ENCODE measurements at regions of chr17 and their contacts with region 1.

Region 1: GRCh38 chr17:65137021-65137991 is at the start of gene RGS9:
- H3K4me3 ChIP-seq: peak within 1 kb of the TSS; percentile 32
- H3K27ac ChIP-seq: no peak within 1 kb of the TSS
- H3K4me1 ChIP-seq: no peaks in the 10 kb centered on the region
- CTCF ChIP-seq: peak; percentile 95

Region 2: GRCh38 chr17:64920419-64921172 is 216.7 kb before region 1 on chr17:
- CTCF ChIA-PET with region 1: no interaction called
- POLR2A ChIA-PET with region 1: no interaction called
- H3K4me3 ChIP-seq: no peak overlapping the region
- H3K27ac ChIP-seq: no peak overlapping the region
- H3K4me1 ChIP-seq: no peaks in the 10 kb centered on the region
- CTCF ChIP-seq: no peak

Region 3: GRCh38 chr17:65020313-65020712 is 117.0 kb before region 1 on chr17:
- CTCF ChIA-PET with region 1: interaction called, 12 read pairs
- POLR2A ChIA-PET with region 1: no interaction called
- H3K4me3 ChIP-seq: no peak overlapping the region
- H3K27ac ChIP-seq: no peak overlapping the region
- H3K4me1 ChIP-seq: peaks cover 44% of the 10 kb centered on the region
- CTCF ChIP-seq: no peak

Region 4: GRCh38 chr17:65122836-65123756 is 14.2 kb before region 1 on chr17:
- CTCF ChIA-PET with region 1: interaction called, 17 read pairs
- POLR2A ChIA-PET with region 1: no interaction called
- H3K4me3 ChIP-seq: peak overlapping the region; percentile 61
- H3K27ac ChIP-seq: peak overlapping the region; percentile 4; the same call in 1 of the 2 replicates
- H3K4me1 ChIP-seq: no peaks in the 10 kb centered on the region
- CTCF ChIP-seq: no peak

Region 5: GRCh38 chr17:65154770-65155621 is 17.7 kb after region 1 on chr17:
- CTCF ChIA-PET with region 1: interaction called, 17 read pairs
- POLR2A ChIA-PET with region 1: no interaction called
- H3K4me3 ChIP-seq: no peak overlapping the region
- H3K27ac ChIP-seq: no peak overlapping the region
- H3K4me1 ChIP-seq: 0 out of 2 replicates have a peak, but pooled peaks cover 2% of the 10 kb centered on the region
- CTCF ChIP-seq: no peak

Region 6: GRCh38 chr17:65163990-65164495 is 26.7 kb after region 1 on chr17:
- CTCF ChIA-PET with region 1: interaction called, 13 read pairs
- POLR2A ChIA-PET with region 1: no interaction called
- H3K4me3 ChIP-seq: no peak overlapping the region
- H3K27ac ChIP-seq: no peak overlapping the region
- H3K4me1 ChIP-seq: no peaks in the 10 kb centered on the region
- CTCF ChIP-seq: no peak

Region 7: GRCh38 chr17:65198653-65199382 is 61.5 kb after region 1 on chr17:
- CTCF ChIA-PET with region 1: interaction called, 11 read pairs
- POLR2A ChIA-PET with region 1: no interaction called
- H3K4me3 ChIP-seq: no peak overlapping the region
- H3K27ac ChIP-seq: no peak overlapping the region
- H3K4me1 ChIP-seq: no peaks in the 10 kb centered on the region
- CTCF ChIP-seq: peak; percentile 36; the same call in 1 of the 2 replicates

Region 8: DNA sequence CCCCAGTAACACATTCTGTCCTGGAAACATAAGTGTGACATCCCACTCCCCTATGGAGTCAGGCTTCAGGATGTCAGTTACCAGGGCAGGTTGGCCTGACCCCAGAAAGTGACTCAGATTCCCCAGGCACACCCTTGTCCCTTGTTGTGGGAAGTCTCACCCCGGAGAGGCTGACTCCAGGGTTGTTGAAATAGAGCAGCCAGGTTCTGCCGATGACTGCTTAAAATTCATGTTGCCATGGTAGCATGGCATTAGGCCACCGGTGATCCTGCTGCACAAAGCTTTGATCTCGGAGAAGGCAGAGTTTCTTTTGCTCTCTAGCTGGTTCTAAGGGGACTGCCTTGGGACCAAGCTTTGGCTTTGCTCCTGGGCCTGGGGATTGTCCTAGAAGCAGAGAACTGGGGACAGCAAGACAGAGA is 106.5 kb after region 1 on chr17:
- CTCF ChIA-PET with region 1: no interaction called
- POLR2A ChIA-PET with region 1: no interaction called
- H3K4me3 ChIP-seq: no peak overlapping the region
- H3K27ac ChIP-seq: no peak overlapping the region
- H3K4me1 ChIP-seq: peaks cover 3% of the 10 kb centered on the region; the same call in 1 of the 2 replicates
- CTCF ChIP-seq: no peak

Measured in HEK293 (cell line).